GM12878 (cell line): ENCODE measurements at regions of chr12 and their contacts with region 1.

Region 1: GRCh38 chr12:93419388-93420034 is 22.2 kb downstream of the UBE2N start:
- DNase-seq: no peak
- ATAC-seq: peak; percentile 54
- H3K4me3 ChIP-seq: no peak overlapping the region
- H3K27ac ChIP-seq: no peak overlapping the region
- H3K4me1 ChIP-seq: peaks cover 83% of the 10 kb centered on the region
- H3K27me3 ChIP-seq: no peaks in the 10 kb centered on the region
- CTCF ChIP-seq: peak; percentile 48 to 58 (median 54); a peak in 5 of 6 replicates
- EP300 ChIP-seq: no peak
- POLR2A ChIP-seq: no peak
- RAD21 ChIP-seq: peak; percentile 46; the same call in 1 of the 2 replicates

Region 2: DNA sequence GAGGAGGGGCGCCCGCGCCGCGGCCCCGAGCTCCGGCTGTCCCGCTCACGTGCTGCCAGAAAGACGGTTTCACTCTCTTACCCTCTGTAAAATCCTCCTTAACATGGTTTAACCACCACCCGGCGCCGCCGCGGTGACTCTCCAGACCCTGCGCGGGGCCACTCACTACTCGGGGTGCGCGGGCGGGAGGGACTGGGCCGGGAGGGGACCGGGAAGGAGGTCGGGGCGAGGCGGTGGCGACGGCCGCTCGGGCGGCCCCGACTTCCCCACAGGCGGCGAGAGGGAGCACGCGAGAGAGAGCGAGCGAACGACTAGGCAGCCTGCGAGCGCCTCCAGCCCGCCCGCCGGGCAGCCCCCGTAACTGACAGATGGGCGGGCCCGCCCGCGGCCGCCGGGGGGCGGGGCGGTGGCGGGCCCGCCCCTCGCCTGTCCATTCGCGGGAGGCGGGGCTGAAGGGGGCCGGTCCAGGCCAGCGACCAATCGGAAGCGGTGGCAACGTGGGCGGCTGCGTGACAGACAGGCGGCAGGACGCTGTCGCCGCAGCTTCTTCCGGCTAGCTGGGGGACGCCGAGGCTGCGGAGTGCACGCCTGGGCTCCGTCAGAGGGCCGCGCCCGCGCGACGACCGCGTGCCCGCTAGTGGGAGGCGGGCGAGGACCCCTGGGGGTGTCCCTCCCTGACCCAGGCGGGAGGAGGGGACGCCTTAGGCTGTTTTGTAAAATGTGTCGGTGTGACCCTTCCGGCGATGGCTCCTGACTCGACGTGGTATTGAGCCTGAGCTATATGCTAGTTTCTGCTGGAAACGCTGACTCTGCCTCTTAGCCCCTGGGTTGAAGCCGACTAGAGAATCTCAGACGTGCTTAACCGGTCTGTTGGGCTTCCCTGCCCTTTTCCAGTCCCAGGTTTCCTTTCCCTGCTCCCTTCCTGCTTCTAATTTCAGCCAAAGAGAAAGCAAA is 490.3 kb before region 1 on chr12 and contains the start of gene EEA1:
- CTCF ChIA-PET with region 1: interaction called, 15 read pairs
- POLR2A ChIA-PET with region 1: interaction called, 4 read pairs
- RAD21 ChIA-PET with region 1: interaction called, 4 read pairs
- SMC1A ChIA-PET with region 1: interaction called, 9 read pairs
- in situ Hi-C with region 1: no loop called
- intact Hi-C with region 1: no loop called
- DNase-seq: peak; percentile 84
- ATAC-seq: peak; percentile 87
- H3K4me3 ChIP-seq: peak within 1 kb of the TSS; percentile 79
- H3K27ac ChIP-seq: peak within 1 kb of the TSS; percentile 98
- H3K4me1 ChIP-seq: peaks cover 4% of the 10 kb centered on the region
- H3K27me3 ChIP-seq: no peaks in the 10 kb centered on the region
- CTCF ChIP-seq: peak in 2 of 3 experiments; percentile 29 to 31; a peak in 3 of 6 replicates
- EP300 ChIP-seq: peak; percentile 30 to 35; a peak in 2 of 4 replicates
- POLR2A ChIP-seq: peak; percentile 96
- RAD21 ChIP-seq: peak; percentile 16; the same call in 1 of the 2 replicates
- polyA plus RNA-seq, gene EEA1: 5.5 to 9.5 TPM

Region 3: DNA sequence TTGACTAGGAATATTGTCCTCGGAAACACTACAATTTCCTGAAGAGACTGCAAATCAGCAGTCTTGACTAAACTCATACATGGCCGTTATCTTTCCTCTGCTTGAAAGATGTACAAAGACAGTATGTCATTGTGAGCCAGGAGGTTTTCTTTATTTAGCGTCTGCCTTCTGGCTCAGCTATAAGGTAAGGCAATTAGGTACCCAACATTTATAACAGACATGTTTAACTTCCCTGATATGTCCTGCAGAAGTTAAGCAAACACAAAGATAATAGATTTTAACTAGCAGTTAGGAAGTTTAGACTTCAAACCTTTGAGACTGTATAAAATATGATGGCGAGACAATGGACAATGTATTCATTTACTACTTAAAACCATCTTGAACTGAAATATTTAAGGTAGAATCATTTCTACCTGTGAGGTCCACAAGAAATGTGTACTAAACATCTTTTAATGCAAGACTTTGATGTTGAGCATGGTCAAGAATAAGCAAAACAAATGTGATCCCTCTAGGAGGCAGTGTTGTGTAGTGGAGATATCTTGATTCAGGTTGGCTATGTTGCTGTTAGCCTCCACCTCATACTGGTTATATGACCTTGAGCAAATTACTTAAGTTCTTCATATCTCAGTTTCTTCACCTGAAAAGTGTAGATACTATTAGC is 394.2 kb before region 1 on chr12:
- CTCF ChIA-PET with region 1: interaction called, 11 read pairs
- POLR2A ChIA-PET with region 1: no interaction called
- RAD21 ChIA-PET with region 1: interaction called, 6 read pairs
- SMC1A ChIA-PET with region 1: interaction called, 17 read pairs
- in situ Hi-C with region 1: no loop called
- intact Hi-C with region 1: no loop called
- DNase-seq: peak; percentile 63
- ATAC-seq: peak; percentile 99
- H3K4me3 ChIP-seq: no peak overlapping the region
- H3K27ac ChIP-seq: no peak overlapping the region
- H3K4me1 ChIP-seq: no peaks in the 10 kb centered on the region
- H3K27me3 ChIP-seq: no peaks in the 10 kb centered on the region
- CTCF ChIP-seq: peak; percentile 61 to 70 (median 69); a peak in 5 of 6 replicates
- EP300 ChIP-seq: no peak
- POLR2A ChIP-seq: no peak
- RAD21 ChIP-seq: peak; percentile 91

Region 4: GRCh38 chr12:93287149-93287548 is 132.4 kb before region 1 on chr12:
- CTCF ChIA-PET with region 1: no interaction called
- POLR2A ChIA-PET with region 1: no interaction called
- RAD21 ChIA-PET with region 1: no interaction called
- SMC1A ChIA-PET with region 1: no interaction called
- in situ Hi-C with region 1: no loop called
- intact Hi-C with region 1: no loop called
- DNase-seq: no peak
- ATAC-seq: no peak
- H3K4me3 ChIP-seq: no peak overlapping the region
- H3K27ac ChIP-seq: no peak overlapping the region
- H3K4me1 ChIP-seq: no peaks in the 10 kb centered on the region
- H3K27me3 ChIP-seq: no peaks in the 10 kb centered on the region
- CTCF ChIP-seq: no peak
- EP300 ChIP-seq: no peak
- POLR2A ChIP-seq: no peak
- RAD21 ChIP-seq: no peak

Region 5: DNA sequence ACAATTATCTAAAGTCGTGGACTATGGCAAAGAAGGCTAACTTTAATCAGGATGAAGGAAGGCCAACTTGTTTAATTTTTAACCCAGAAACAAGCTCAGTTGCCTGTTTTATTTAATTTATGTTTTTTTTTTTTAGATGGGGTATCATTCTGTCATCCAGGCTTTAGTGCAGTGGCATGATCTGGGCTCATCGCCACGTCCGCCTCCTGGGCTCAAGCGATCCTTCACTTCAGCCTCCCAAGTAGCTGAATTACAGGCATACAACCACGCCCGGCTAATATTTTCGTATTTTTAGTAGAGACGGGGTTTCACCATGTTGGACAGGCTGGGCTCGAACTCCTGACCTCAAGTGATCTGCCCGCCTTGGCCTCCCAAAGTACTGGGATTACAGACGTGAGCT is 22.1 kb before region 1 on chr12:
- CTCF ChIA-PET with region 1: interaction called, 34 read pairs
- POLR2A ChIA-PET with region 1: interaction called, 3 read pairs
- RAD21 ChIA-PET with region 1: interaction called, 17 read pairs
- SMC1A ChIA-PET with region 1: interaction called, 39 read pairs
- in situ Hi-C with region 1: no loop called
- intact Hi-C with region 1: no loop called
- DNase-seq: no peak
- ATAC-seq: no peak
- H3K4me3 ChIP-seq: no peak overlapping the region
- H3K27ac ChIP-seq: no peak overlapping the region
- H3K4me1 ChIP-seq: no peaks in the 10 kb centered on the region; the same call in 1 of the 2 replicates
- H3K27me3 ChIP-seq: no peaks in the 10 kb centered on the region
- CTCF ChIP-seq: no peak
- EP300 ChIP-seq: no peak
- POLR2A ChIP-seq: no peak
- RAD21 ChIP-seq: no peak

Region 6: GRCh38 chr12:93441617-93442410 is 22.3 kb after region 1 on chr12 and contains the start of gene UBE2N:
- CTCF ChIA-PET with region 1: interaction called, 163 read pairs
- POLR2A ChIA-PET with region 1: interaction called, 65 read pairs
- RAD21 ChIA-PET with region 1: interaction called, 145 read pairs
- SMC1A ChIA-PET with region 1: interaction called, 86 read pairs
- in situ Hi-C with region 1: no loop called
- intact Hi-C with region 1: no loop called
- DNase-seq: peak; percentile 70
- ATAC-seq: peak; percentile 87
- H3K4me3 ChIP-seq: peak within 1 kb of the TSS; percentile 83
- H3K27ac ChIP-seq: peak within 1 kb of the TSS; percentile 73
- H3K4me1 ChIP-seq: peaks cover 9% of the 10 kb centered on the region
- H3K27me3 ChIP-seq: no peaks in the 10 kb centered on the region
- CTCF ChIP-seq: no peak
- EP300 ChIP-seq: no peak
- POLR2A ChIP-seq: peak; percentile 96
- RAD21 ChIP-seq: no peak
- polyA plus RNA-seq, gene UBE2N: 699 to 945 TPM